Endothelial cell of umbilical vein (primary cell): ENCODE measurements at regions of chr15 and their contacts with region 1.

Region 1: DNA sequence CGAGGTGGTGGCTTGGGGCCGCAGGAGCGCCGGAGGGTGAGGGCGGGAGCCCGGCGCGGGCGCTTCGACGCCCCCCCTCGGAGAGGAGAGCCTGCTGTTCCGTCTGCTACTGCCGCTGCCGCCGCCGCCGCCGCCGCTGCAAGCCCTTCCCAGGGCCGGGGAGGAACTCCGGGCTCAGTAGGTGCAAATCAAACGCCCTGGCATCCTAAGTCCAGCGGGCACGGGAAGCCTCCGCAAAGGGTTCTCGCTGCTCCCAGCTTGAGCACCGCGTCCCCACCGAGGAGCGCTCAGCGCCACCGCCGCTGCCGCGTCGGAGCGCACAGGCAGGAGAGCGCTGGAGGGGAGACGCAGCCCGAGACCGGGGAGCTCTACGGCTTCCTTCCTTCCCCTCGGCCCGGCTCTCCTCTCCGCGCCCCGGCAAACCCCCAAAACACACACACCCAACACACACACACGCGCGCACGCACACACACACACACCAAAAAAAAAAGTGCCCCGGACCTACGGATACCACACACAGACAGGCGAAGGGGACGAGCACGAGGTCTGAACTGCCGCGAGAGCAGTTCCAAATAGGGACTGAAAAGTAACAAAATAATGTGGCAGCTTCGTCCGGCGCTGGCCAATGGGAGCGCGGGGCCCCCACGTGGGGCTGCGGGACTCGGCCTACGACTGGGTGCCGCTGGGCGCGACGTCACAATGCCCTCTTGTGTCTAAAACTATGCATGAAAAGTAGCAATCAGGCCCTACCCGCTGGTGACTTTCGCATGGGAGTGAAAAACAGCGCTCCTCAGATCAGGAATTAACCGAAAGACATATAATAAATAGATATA is at the start of gene TLE3:
- DNase-seq: peak; percentile 99
- H3K4me3 ChIP-seq: peak within 1 kb of the TSS; percentile 88 to 98 (median 89)
- H3K27ac ChIP-seq: peak within 1 kb of the TSS; percentile 85
- H3K4me1 ChIP-seq: peaks cover 53% of the 10 kb centered on the region
- H3K27me3 ChIP-seq: no peaks in the 10 kb centered on the region
- CTCF ChIP-seq: peak in 1 of 2 donors; percentile 39
- POLR2A ChIP-seq: peak; percentile 88
- total RNA-seq, gene TLE3: 53.8 and 56.9 TPM in 2 replicates

Region 2: GRCh38 chr15:69576035-69576526 is 521.5 kb before region 1 on chr15:
- CTCF ChIA-PET with region 1: no interaction called
- POLR2A ChIA-PET with region 1: no interaction called
- dilution Hi-C with region 1: no loop called
- intact Hi-C with region 1: loop called (anchors 10 kb)
- DNase-seq: peak; percentile 22
- H3K4me3 ChIP-seq: no peak overlapping the region
- H3K27ac ChIP-seq: no peak overlapping the region
- H3K4me1 ChIP-seq: peaks cover 4% of the 10 kb centered on the region
- H3K27me3 ChIP-seq: peaks cover 2 to 6% of the 10 kb centered on the region in 2 experiments
- CTCF ChIP-seq: peak; percentile 44 to 73
- POLR2A ChIP-seq: no peak

Region 3: GRCh38 chr15:69760890-69761568 is 336.5 kb before region 1 on chr15:
- CTCF ChIA-PET with region 1: no interaction called
- POLR2A ChIA-PET with region 1: no interaction called
- dilution Hi-C with region 1: no loop called
- intact Hi-C with region 1: loop called (anchors 2 kb)
- DNase-seq: peak; percentile 97
- H3K4me3 ChIP-seq: no peak overlapping the region
- H3K27ac ChIP-seq: peak overlapping the region; percentile 67
- H3K4me1 ChIP-seq: peaks cover 36% of the 10 kb centered on the region
- H3K27me3 ChIP-seq: no peaks in the 10 kb centered on the region
- CTCF ChIP-seq: no peak
- POLR2A ChIP-seq: peak; percentile 39

Region 4: GRCh38 chr15:69946870-69947269 is 150.7 kb before region 1 on chr15:
- CTCF ChIA-PET with region 1: no interaction called
- POLR2A ChIA-PET with region 1: no interaction called
- dilution Hi-C with region 1: no loop called
- intact Hi-C with region 1: no loop called
- DNase-seq: no peak
- H3K4me3 ChIP-seq: no peak overlapping the region
- H3K27ac ChIP-seq: no peak overlapping the region
- H3K4me1 ChIP-seq: no peaks in the 10 kb centered on the region
- H3K27me3 ChIP-seq: no peaks in the 10 kb centered on the region
- CTCF ChIP-seq: no peak
- POLR2A ChIP-seq: no peak

Region 5: DNA sequence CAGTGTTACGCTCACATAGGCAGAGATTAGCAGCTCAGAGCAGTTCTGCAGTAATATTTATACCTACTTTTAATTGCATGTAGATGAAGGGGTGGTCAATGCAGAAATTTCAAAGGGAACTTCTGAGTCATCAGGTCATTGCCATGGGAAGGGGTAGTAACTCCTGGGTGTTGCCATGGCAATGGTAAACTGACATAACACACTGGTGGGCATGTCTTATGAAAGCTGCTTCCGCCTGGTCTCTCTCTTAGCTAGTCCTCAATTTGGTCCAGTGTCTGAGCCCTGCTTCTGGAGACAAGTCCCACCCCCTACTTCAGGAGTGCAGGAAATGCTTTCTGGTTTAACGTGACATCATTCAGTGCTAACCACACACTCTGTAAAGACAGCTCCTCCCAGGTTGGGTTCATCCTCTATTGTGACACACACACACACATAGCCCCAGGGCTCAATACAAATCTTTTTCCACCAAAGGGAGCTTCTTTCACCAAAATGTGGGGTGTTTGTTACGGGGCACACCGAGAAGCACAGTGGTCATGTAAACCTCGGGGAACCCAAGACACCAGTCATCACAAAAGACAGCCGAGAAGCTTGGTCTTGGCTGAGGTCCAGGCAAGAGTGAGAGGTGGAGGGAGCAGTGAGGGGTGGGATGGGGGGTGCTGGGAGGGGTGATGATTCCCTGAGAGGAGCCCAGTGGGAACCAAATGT is 74.3 kb before region 1 on chr15:
- CTCF ChIA-PET with region 1: no interaction called
- POLR2A ChIA-PET with region 1: no interaction called
- dilution Hi-C with region 1: no loop called
- intact Hi-C with region 1: no loop called
- DNase-seq: peak; percentile 7
- H3K4me3 ChIP-seq: no peak overlapping the region
- H3K27ac ChIP-seq: no peak overlapping the region
- H3K4me1 ChIP-seq: no peaks in the 10 kb centered on the region
- H3K27me3 ChIP-seq: no peaks in the 10 kb centered on the region
- CTCF ChIP-seq: no peak
- POLR2A ChIP-seq: no peak

Region 6: DNA sequence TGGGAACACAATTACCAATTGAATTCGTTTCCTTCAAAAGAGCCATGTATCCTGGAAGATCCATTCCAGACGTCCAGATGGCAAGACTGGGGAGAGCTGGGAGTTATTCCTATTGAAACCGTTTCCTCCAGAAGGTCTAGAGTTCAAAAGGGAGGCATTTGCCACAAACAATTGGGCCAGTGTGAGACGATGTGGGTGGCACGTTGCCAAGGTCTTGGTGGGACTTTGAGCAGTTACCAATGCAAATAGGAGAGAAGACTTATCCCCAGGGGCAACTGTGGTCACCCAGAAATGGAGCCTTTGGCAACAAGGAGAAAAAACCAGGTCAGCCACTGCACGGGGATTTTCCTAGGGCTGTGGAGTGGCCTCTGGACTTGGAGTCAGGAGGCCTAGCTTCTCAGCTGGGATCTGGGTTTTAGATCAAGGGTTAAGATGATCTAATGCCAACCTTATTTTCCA is 29.8 kb after region 1 on chr15:
- CTCF ChIA-PET with region 1: interaction called, 5 read pairs
- POLR2A ChIA-PET with region 1: no interaction called
- dilution Hi-C with region 1: no loop called
- intact Hi-C with region 1: loop called (anchors 1 kb)
- DNase-seq: peak; percentile 94
- H3K4me3 ChIP-seq: no peak overlapping the region
- H3K27ac ChIP-seq: peak overlapping the region; percentile 35
- H3K4me1 ChIP-seq: peaks cover 18% of the 10 kb centered on the region
- H3K27me3 ChIP-seq: peaks cover 6 to 10% of the 10 kb centered on the region in 2 experiments
- CTCF ChIP-seq: no peak
- POLR2A ChIP-seq: no peak

Region 7: GRCh38 chr15:70271422-70272088 is 174.0 kb after region 1 on chr15:
- CTCF ChIA-PET with region 1: interaction called, 4 read pairs
- POLR2A ChIA-PET with region 1: no interaction called
- dilution Hi-C with region 1: no loop called
- intact Hi-C with region 1: loop called (anchors 1 kb)
- DNase-seq: peak; percentile 89
- H3K4me3 ChIP-seq: no peak overlapping the region
- H3K27ac ChIP-seq: peak overlapping the region; percentile 80
- H3K4me1 ChIP-seq: peaks cover 36% of the 10 kb centered on the region
- H3K27me3 ChIP-seq: no peaks in the 10 kb centered on the region
- CTCF ChIP-seq: no peak
- POLR2A ChIP-seq: no peak

Region 8: GRCh38 chr15:70701891-70702568 is 604.5 kb after region 1 on chr15:
- CTCF ChIA-PET with region 1: no interaction called
- POLR2A ChIA-PET with region 1: no interaction called
- dilution Hi-C with region 1: no loop called
- intact Hi-C with region 1: loop called (anchors 2 kb)
- DNase-seq: peak; percentile 86
- H3K4me3 ChIP-seq: peak overlapping the region in 2 of 3 experiments; percentile 35 to 96
- H3K27ac ChIP-seq: peak overlapping the region; percentile 94
- H3K4me1 ChIP-seq: peaks cover 55% of the 10 kb centered on the region
- H3K27me3 ChIP-seq: no peaks in the 10 kb centered on the region
- CTCF ChIP-seq: no peak
- POLR2A ChIP-seq: peak; percentile 20